Right ventricle myocardium inferior (tissue), 1 donor: ENCODE measurements at regions of chrX and their contacts with region 1.

Region 1: DNA sequence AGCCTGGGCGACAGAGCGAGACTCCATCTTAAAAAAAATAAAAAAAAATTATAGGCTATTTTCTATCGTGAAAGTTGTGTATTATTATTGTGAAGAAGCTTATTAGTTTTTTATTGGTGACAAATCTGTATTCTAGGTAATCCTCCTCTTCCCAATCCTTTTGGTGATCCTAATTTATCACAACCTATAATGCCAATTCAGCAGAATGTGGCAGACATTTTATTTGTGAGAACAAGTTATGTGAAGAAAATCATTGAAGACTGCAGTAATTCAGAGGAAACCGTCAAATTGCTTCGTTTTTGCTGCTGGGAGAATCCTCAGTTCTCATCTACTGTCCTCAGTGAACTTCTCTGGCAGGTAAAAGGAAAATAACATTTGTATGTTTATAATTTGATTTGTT is 109.4 kb upstream of the DDX3X start:
- DNase-seq: no peak
- ATAC-seq: no peak

Region 2: GRCh38 chrX:41108007-41108406 is 116.6 kb before region 1 on chrX:
- intact Hi-C with region 1: no loop called
- DNase-seq: no peak
- ATAC-seq: no peak

Region 3: GRCh38 chrX:41153448-41153847 is 71.2 kb before region 1 on chrX:
- intact Hi-C with region 1: loop called (anchors 10 kb)
- DNase-seq: no peak
- ATAC-seq: no peak